Spleen (tissue), 13 donors: ENCODE measurements at regions of chr5 and their contacts with region 1.

Region 1: DNA sequence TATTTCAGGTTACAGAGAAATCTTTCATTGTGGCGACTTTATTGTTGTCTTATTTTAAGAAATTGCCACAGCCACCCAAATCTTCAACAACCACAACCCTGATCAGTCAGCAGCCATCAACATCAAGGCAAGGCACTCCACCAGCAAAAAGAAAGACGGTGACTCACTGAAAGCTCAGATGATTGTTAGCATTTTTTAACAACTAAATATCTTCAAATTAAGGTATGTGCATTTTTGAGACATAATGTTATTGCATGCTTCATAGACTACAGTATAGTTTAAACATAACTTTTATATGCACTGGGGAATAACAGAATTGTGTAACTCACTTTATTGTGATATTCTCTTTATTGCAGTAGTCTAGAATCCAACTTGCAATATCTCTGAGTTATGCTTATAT is 263.4 kb downstream of the TMEM232 start:
- DNase-seq: no peak
- H3K4me3 ChIP-seq: no peak overlapping the region
- H3K27ac ChIP-seq: no peak overlapping the region
- H3K4me1 ChIP-seq: no peaks in the 10 kb centered on the region
- H3K27me3 ChIP-seq: no peaks in the 10 kb centered on the region
- CTCF ChIP-seq: no peak
- POLR2A ChIP-seq: no peak

Region 2: DNA sequence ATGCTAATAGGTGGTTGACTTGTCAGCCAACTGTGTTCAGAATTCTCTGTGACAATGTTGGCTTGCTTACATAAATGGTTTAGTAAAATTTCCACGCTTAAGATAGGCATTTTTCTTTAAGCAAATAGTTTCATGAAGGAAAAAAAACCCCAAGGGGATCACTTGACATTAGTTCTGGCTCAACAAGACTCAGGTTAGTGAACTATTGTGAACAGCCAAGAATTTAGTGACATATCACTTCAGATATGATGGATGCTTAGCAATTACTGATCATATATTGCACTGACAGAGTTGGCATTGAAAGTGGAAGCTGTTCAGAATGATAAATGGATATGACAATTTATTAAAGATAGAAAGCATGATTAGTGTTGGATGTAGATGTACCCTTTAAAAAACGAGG is 44.9 kb after region 1 on chr5:
- intact Hi-C with region 1: loop called (anchors 1 kb)
- DNase-seq: no peak
- H3K4me3 ChIP-seq: no peak overlapping the region
- H3K27ac ChIP-seq: no peak overlapping the region
- H3K4me1 ChIP-seq: no peaks in the 10 kb centered on the region
- H3K27me3 ChIP-seq: no peaks in the 10 kb centered on the region
- CTCF ChIP-seq: no peak
- POLR2A ChIP-seq: no peak

Region 3: GRCh38 chr5:110625376-110625999 is 162.4 kb after region 1 on chr5:
- intact Hi-C with region 1: no loop called
- DNase-seq: no peak
- H3K4me3 ChIP-seq: no peak overlapping the region
- H3K27ac ChIP-seq: no peak overlapping the region
- H3K4me1 ChIP-seq: no peaks in the 10 kb centered on the region
- H3K27me3 ChIP-seq: no peaks in the 10 kb centered on the region
- CTCF ChIP-seq: peak in 9 of 11 experiments; percentile 19 to 57 (median 40)
- POLR2A ChIP-seq: no peak

Region 4: GRCh38 chr5:111389390-111390082 is 926.4 kb after region 1 on chr5:
- intact Hi-C with region 1: no loop called
- DNase-seq: no peak
- H3K4me3 ChIP-seq: no peak overlapping the region
- H3K27ac ChIP-seq: no peak overlapping the region
- H3K4me1 ChIP-seq: no peaks in the 10 kb centered on the region
- H3K27me3 ChIP-seq: no peaks in the 10 kb centered on the region
- CTCF ChIP-seq: no peak
- POLR2A ChIP-seq: no peak